ENCODE measurements at regions of chr2 and their contacts with region 1.

Region 1: GRCh38 chr2:16900405-16901025 is 234.9 kb upstream of the CYRIA start:
- DNase-seq: peak; percentile 68
- H3K4me3 ChIP-seq: no peak overlapping the region
- H3K27ac ChIP-seq: no peak overlapping the region
- H3K4me1 ChIP-seq: no peaks in the 10 kb centered on the region
- H3K27me3 ChIP-seq: peaks cover 3% of the 10 kb centered on the region
- CTCF ChIP-seq: peak; percentile 97

Region 2: DNA sequence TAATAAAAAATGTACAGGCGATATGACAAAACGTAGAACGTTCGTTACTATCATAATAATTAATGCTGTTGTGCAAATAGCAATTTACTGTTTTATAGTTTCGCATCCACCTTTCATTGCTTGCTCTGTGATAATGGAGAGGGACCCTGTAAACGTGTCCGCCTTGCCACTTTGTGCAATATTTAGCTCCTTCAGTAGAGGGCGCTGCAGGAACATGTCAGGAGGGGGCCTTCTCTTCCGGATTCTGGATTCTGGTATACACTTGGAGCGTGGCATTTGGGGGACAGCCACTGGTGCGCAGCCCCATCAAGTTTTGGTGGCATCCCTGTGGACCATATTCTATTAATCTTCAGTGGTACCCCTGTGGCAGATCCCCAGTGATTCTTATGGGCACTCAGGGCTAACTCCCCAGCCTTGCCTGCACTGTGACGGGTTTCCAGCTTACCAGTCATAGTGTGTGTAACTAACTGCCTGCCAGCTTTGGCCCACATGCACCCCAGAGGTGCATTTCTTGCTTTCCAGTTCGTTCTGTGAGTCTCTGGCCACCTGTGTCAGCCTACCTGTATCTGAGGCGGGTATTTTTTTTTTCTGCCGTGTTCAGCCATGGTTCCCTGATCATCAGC is 375.1 kb before region 1 on chr2:
- CTCF ChIA-PET with region 1: no interaction called
- POLR2A ChIA-PET with region 1: no interaction called
- intact Hi-C with region 1: loop called (anchors 10 kb)
- DNase-seq: peak; percentile 75
- H3K4me3 ChIP-seq: no peak overlapping the region
- H3K27ac ChIP-seq: no peak overlapping the region
- H3K4me1 ChIP-seq: peaks cover 18% of the 10 kb centered on the region
- H3K27me3 ChIP-seq: no peaks in the 10 kb centered on the region
- CTCF ChIP-seq: peak; percentile 86

Measured in A673 (cell line).